Transverse colon (tissue), 4 donors: ENCODE measurements at regions of chr6 and their contacts with region 1.

Region 1: GRCh38 chr6:2353412-2354137 is 108.2 kb upstream of the GMDS start:
- DNase-seq: peak; percentile 78
- H3K4me3 ChIP-seq: no peak overlapping the region
- H3K27ac ChIP-seq: no peak overlapping the region
- H3K4me1 ChIP-seq: peaks cover 0 to 8% (median 0%) of the 10 kb centered on the region in 4 donors
- H3K27me3 ChIP-seq: no peaks in the 10 kb centered on the region
- CTCF ChIP-seq: peak; percentile 71 to 83 (median 81)
- EP300 ChIP-seq: no peak
- POLR2A ChIP-seq: no peak

Region 2: DNA sequence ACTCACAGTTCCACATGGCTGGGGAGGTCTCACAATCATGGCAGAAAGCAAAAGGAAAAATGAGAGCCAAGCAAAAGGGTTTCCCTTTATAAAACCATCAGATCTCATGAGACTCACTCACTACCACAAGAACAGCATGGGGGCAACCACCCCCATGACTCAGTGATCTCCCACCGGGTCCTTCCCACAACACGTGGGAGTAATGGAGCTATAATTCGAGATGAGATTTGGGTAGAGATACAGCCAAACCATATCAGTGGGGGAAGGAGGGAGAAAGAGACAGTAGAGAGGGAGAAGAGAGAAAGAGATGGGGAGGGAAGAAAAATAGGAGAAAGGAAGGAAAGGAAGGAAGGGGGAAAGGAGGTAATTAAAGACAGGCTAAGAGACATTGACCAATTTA is 138.2 kb before region 1 on chr6:
- in situ Hi-C with region 1: loop called in 3 of 4 experiments (anchors 5 to 25 kb)
- intact Hi-C with region 1: no loop called
- DNase-seq: no peak
- H3K4me3 ChIP-seq: no peak overlapping the region
- H3K27ac ChIP-seq: no peak overlapping the region
- H3K4me1 ChIP-seq: no peaks in the 10 kb centered on the region
- H3K27me3 ChIP-seq: no peaks in the 10 kb centered on the region
- CTCF ChIP-seq: no peak
- EP300 ChIP-seq: no peak
- POLR2A ChIP-seq: no peak

Region 3: GRCh38 chr6:2634139-2634964 is 280.8 kb after region 1 on chr6:
- in situ Hi-C with region 1: loop called in 1 of 4 experiments (anchors 25 kb)
- intact Hi-C with region 1: no loop called
- DNase-seq: peak; percentile 82
- H3K4me3 ChIP-seq: peak overlapping the region; percentile 20 to 52 (median 32)
- H3K27ac ChIP-seq: peak overlapping the region; percentile 6 to 40 (median 25)
- H3K4me1 ChIP-seq: peaks cover 0 to 13% (median 7%) of the 10 kb centered on the region in 4 donors
- H3K27me3 ChIP-seq: no peaks in the 10 kb centered on the region
- CTCF ChIP-seq: peak; percentile 95 to 99 (median 97)
- EP300 ChIP-seq: no peak
- POLR2A ChIP-seq: no peak